ENCODE measurements at regions of chr20 and their contacts with region 1.

Region 1: GRCh38 chr20:56400090-56400542 is 7.7 kb downstream of the CSTF1 start:
- DNase-seq: no peak
- H3K4me3 Mint-ChIP-seq: no peak overlapping the region
- H3K27ac Mint-ChIP-seq: no peak overlapping the region
- H3K4me1 Mint-ChIP-seq: peaks cover 19% of the 10 kb centered on the region
- H3K27me3 Mint-ChIP-seq: no peaks in the 10 kb centered on the region

Region 2: GRCh38 chr20:56257604-56258003 is 142.5 kb before region 1 on chr20:
- intact Hi-C with region 1: no loop called
- DNase-seq: no peak
- H3K4me3 Mint-ChIP-seq: no peak overlapping the region
- H3K27ac Mint-ChIP-seq: no peak overlapping the region
- H3K4me1 Mint-ChIP-seq: no peaks in the 10 kb centered on the region
- H3K27me3 Mint-ChIP-seq: peaks cover 2% of the 10 kb centered on the region

Region 3: GRCh38 chr20:56306912-56307311 is 93.2 kb before region 1 on chr20:
- intact Hi-C with region 1: no loop called
- DNase-seq: no peak
- H3K4me3 Mint-ChIP-seq: no peak overlapping the region
- H3K27ac Mint-ChIP-seq: no peak overlapping the region
- H3K4me1 Mint-ChIP-seq: no peaks in the 10 kb centered on the region
- H3K27me3 Mint-ChIP-seq: no peaks in the 10 kb centered on the region

Region 4: DNA sequence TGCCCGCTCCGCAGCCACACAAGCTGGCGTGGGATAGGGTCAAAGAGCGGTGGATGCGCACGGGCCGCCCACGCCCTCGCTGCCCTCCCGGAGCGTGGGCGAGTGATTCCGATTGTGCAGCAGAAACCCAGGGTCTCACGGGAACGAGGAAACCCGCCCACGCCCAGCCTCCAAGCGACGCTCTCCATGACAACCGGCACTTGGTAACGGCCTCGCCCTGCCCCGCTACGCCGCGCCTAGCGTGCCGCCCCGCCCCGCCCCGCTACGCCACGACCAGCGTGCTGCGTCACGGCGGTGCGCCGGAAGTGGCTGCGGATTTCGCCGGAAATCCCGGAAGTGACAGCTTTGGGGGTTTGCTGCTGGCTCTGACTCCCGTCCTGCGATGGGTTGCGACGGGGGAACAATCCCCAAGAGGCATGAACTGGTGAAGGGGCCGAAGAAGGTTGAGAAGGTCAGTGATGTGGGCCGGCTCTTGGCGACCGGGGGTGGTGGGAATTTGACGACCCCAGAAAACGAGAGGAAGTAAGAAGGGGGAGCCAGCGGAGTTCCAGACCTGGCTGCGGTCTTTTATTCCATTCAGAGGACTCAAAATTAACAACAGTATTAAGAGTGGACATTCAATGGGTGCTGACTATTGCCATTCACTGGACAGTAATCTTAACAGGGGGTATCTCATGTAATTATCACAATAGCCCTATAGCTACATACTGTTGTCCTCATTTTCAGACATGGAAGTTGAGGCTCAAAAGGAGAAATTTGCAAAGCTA is 68.4 kb after region 1 on chr20 and contains the start of gene RTF2:
- intact Hi-C with region 1: loop called (anchors 1 kb)
- DNase-seq: peak; percentile 95
- H3K4me3 Mint-ChIP-seq: peak within 1 kb of the TSS; percentile 99
- H3K27ac Mint-ChIP-seq: peak within 1 kb of the TSS; percentile 97
- H3K4me1 Mint-ChIP-seq: peaks cover 36% of the 10 kb centered on the region
- H3K27me3 Mint-ChIP-seq: no peaks in the 10 kb centered on the region
- total RNA-seq, gene RTF2: 103 and 107 TPM in 2 replicates

Region 5: DNA sequence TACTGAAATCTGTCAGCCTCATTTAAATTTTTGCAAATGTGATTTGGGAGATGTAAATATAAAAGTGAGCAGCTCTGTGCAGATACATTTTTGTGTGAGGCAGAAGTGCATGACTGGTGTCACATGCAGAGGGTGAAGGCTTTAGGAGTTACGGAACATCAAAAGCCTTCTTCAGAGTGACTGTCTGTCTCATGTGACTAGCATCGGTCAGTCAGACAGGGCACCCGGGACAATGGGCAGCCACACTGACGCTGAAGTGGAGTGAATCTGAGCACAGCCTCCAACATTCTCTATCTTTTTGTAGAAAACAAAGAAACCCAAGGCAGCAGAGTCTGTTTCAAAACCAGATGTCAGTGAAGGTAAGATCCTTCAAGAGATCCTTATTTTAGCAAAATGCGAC is 116.5 kb after region 1 on chr20:
- intact Hi-C with region 1: loop called (anchors 5 kb)
- DNase-seq: no peak
- H3K4me3 Mint-ChIP-seq: no peak overlapping the region
- H3K27ac Mint-ChIP-seq: no peak overlapping the region
- H3K4me1 Mint-ChIP-seq: no peaks in the 10 kb centered on the region
- H3K27me3 Mint-ChIP-seq: no peaks in the 10 kb centered on the region